CD8-positive, alpha-beta T cell (primary cell): ENCODE measurements at regions of chr9 and their contacts with region 1.

Region 1: GRCh38 chr9:133335878-133336811 is at the start of gene SURF6:
- DNase-seq: peak; percentile 81 to 97 (median 93)
- ATAC-seq: peak; percentile 94
- H3K4me3 ChIP-seq: peak within 1 kb of the TSS; percentile 67 to 88
- H3K4me3 Mint-ChIP-seq: peak within 1 kb of the TSS; percentile 96
- H3K27ac ChIP-seq: peak within 1 kb of the TSS; percentile 71 to 73
- H3K27ac Mint-ChIP-seq: peak within 1 kb of the TSS; percentile 95
- H3K4me1 ChIP-seq: peaks cover 41% of the 10 kb centered on the region
- H3K4me1 Mint-ChIP-seq: peaks cover 50% of the 10 kb centered on the region
- H3K27me3 ChIP-seq: no peaks in the 10 kb centered on the region
- H3K27me3 Mint-ChIP-seq: no peaks in the 10 kb centered on the region
- CTCF ChIP-seq: no peak
- total RNA-seq, gene SURF6: 17.0 to 17.8 TPM

Region 2: GRCh38 chr9:132944302-132945185 is 391.6 kb before region 1 on chr9 and contains the start of gene TSC1:
- CTCF ChIA-PET with region 1: no interaction called
- POLR2A ChIA-PET with region 1: no interaction called
- intact Hi-C with region 1: loop called in 1 of 2 experiments (anchors 10 kb)
- DNase-seq: peak; percentile 96 to 99 (median 98)
- ATAC-seq: peak; percentile 83
- H3K4me3 ChIP-seq: peak within 1 kb of the TSS; percentile 98 to 99
- H3K4me3 Mint-ChIP-seq: peak within 1 kb of the TSS; percentile 97
- H3K27ac ChIP-seq: peak within 1 kb of the TSS; percentile 90 to 100
- H3K27ac Mint-ChIP-seq: peak within 1 kb of the TSS; percentile 100
- H3K4me1 ChIP-seq: peaks cover 17% of the 10 kb centered on the region
- H3K4me1 Mint-ChIP-seq: peaks cover 29% of the 10 kb centered on the region
- H3K27me3 ChIP-seq: no peaks in the 10 kb centered on the region
- H3K27me3 Mint-ChIP-seq: no peaks in the 10 kb centered on the region
- CTCF ChIP-seq: no peak
- total RNA-seq, gene TSC1: 45.6 to 51.1 TPM

Region 3: GRCh38 chr9:133184962-133185361 is 151.2 kb before region 1 on chr9:
- CTCF ChIA-PET with region 1: no interaction called
- POLR2A ChIA-PET with region 1: no interaction called
- intact Hi-C with region 1: loop called in 1 of 2 experiments (anchors 1 kb)
- DNase-seq: peak in 6 of 9 experiments; percentile 17 to 80 (median 35)
- ATAC-seq: peak; percentile 49
- H3K4me3 ChIP-seq: no peak overlapping the region
- H3K4me3 Mint-ChIP-seq: no peak overlapping the region
- H3K27ac ChIP-seq: no peak overlapping the region
- H3K27ac Mint-ChIP-seq: no peak overlapping the region
- H3K4me1 ChIP-seq: peaks cover 8% of the 10 kb centered on the region
- H3K4me1 Mint-ChIP-seq: peaks cover 13% of the 10 kb centered on the region
- H3K27me3 ChIP-seq: peaks cover 3% of the 10 kb centered on the region in 2 experiments
- H3K27me3 Mint-ChIP-seq: peaks cover 31% of the 10 kb centered on the region
- CTCF ChIP-seq: peak; percentile 46

Region 4: GRCh38 chr9:133356391-133357091 is 20.4 kb after region 1 on chr9 and contains the starts of genes SURF1 and SURF2:
- CTCF ChIA-PET with region 1: interaction called, 7 read pairs
- POLR2A ChIA-PET with region 1: interaction called, 15 read pairs
- intact Hi-C with region 1: loop called (anchors 1 kb)
- DNase-seq: peak; percentile 81 to 93 (median 91)
- ATAC-seq: peak; percentile 93
- H3K4me3 ChIP-seq: peak within 1 kb of the TSS; percentile 78 to 86
- H3K4me3 Mint-ChIP-seq: peak within 1 kb of the TSS; percentile 87
- H3K27ac ChIP-seq: peak within 1 kb of the TSS; percentile 72 to 77
- H3K27ac Mint-ChIP-seq: peak within 1 kb of the TSS; percentile 93
- H3K4me1 ChIP-seq: peaks cover 30% of the 10 kb centered on the region
- H3K4me1 Mint-ChIP-seq: peaks cover 36% of the 10 kb centered on the region
- H3K27me3 ChIP-seq: no peaks in the 10 kb centered on the region
- H3K27me3 Mint-ChIP-seq: no peaks in the 10 kb centered on the region
- CTCF ChIP-seq: no peak
- total RNA-seq, gene SURF1: 34.3 to 36.8 TPM
- total RNA-seq, gene SURF2: 18.6 to 21.9 TPM

Region 5: DNA sequence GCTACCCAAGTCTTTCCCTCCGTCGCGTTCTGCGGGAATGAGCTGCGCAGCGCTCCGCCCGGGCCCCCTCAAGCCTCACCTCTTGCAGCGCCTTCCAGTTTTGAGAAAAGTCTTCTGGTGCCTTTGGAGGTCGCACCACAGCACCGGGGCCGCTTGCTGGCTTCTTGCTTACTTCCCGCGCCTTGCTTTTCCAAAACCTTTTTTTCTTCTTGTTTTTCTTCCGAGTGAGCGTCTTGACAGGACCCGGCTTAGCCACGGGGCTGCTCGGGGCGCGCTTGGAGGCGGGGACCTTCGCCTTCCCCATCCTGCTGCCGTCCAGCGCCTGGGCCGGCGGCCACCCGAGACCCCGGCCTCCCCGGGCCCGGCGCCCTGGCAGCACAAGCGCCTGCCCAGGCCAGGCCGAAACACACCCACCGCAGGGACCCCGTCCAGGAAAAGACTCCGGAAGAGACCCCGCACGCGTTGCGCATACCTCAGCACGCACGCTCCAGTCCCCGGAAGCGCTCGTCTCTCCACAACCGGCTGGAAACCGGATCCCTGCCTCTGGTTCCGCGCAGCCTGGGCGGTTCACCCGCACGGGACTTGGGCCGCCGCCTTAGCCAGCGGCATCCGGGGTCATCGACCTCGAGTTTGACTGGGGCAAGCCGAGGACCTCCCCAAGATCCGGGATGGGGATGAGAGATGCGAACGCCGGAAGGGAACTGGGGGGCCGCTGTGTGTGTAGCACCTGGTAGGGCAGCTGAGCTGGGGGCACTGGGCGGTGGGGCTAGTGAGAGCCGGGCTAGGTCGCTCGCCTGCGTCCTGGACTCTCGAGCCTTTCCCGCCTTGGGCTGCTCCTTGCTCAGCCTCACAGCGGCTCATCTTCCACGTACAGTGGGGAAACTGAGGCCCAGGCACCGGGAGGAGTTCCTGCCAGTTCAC is 81.7 kb after region 1 on chr9 and contains the start of gene REXO4:
- CTCF ChIA-PET with region 1: no interaction called
- POLR2A ChIA-PET with region 1: no interaction called
- intact Hi-C with region 1: loop called (anchors 1 kb)
- DNase-seq: peak; percentile 73 to 91 (median 81)
- ATAC-seq: peak; percentile 88
- H3K4me3 ChIP-seq: peak within 1 kb of the TSS; percentile 80 to 88
- H3K4me3 Mint-ChIP-seq: peak within 1 kb of the TSS; percentile 87
- H3K27ac ChIP-seq: peak within 1 kb of the TSS; percentile 68 to 89
- H3K27ac Mint-ChIP-seq: peak within 1 kb of the TSS; percentile 90
- H3K4me1 ChIP-seq: peaks cover 23% of the 10 kb centered on the region
- H3K4me1 Mint-ChIP-seq: peaks cover 54% of the 10 kb centered on the region
- H3K27me3 ChIP-seq: no peaks in the 10 kb centered on the region
- H3K27me3 Mint-ChIP-seq: no peaks in the 10 kb centered on the region
- CTCF ChIP-seq: no peak
- total RNA-seq, gene REXO4: 22.5 to 24.0 TPM

Region 6: GRCh38 chr9:133478851-133479711 is 142.9 kb after region 1 on chr9 and contains the start of gene SLC2A6:
- CTCF ChIA-PET with region 1: no interaction called
- POLR2A ChIA-PET with region 1: no interaction called
- intact Hi-C with region 1: loop called in 1 of 2 experiments (anchors 2 kb)
- DNase-seq: peak; percentile 58 to 92 (median 81)
- ATAC-seq: peak; percentile 96
- H3K4me3 ChIP-seq: peak within 1 kb of the TSS; percentile 62 to 65
- H3K4me3 Mint-ChIP-seq: peak within 1 kb of the TSS; percentile 75
- H3K27ac ChIP-seq: peak within 1 kb of the TSS; percentile 56 to 59
- H3K27ac Mint-ChIP-seq: peak within 1 kb of the TSS; percentile 72
- H3K4me1 ChIP-seq: peaks cover 15% of the 10 kb centered on the region
- H3K4me1 Mint-ChIP-seq: peaks cover 10% of the 10 kb centered on the region
- H3K27me3 ChIP-seq: no peaks in the 10 kb centered on the region
- H3K27me3 Mint-ChIP-seq: no peaks in the 10 kb centered on the region
- CTCF ChIP-seq: no peak
- total RNA-seq, gene SLC2A6: 8.0 to 9.7 TPM

Region 7: DNA sequence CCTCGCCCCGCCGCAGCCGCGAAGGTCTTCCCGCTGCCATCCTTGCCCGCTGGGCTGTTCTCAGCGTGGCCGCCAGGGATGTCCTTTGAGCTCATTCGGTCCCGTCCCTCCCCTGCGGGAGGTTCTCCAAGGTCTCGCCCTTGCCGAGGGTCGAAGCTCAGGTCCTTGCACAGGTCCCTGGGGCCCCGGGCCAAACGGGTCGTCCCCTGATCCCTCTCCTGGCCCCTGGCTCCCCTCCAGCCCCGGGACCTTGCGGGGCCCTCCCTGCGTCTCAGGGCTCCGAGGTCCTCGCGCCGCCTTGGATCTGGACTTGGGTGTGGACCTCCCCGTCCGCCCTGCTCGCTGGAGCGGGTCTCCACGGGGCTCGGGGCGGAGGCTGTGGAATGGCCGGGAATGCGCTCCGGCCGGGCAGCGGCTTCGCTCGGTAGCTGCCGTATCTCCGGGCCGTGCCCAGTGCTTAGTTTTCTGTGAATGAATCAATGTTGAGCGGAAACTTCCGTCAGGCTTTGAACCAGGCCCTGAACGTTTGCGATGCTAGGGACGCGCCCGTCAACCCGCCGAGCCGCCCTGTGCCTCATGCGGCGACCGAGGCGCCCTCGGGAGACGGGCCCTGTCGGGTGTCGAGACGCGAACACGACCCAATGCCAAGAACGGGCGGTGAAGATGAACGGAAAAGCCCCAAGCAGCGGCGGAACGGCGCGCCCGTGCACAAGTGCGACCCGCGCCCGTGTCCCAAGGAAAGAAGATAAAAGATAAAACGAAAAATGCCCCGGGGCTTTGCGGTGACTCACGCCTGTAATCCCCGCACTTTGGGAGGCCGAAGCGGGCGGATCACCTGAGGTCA is 827.4 kb after region 1 on chr9:
- CTCF ChIA-PET with region 1: no interaction called
- POLR2A ChIA-PET with region 1: no interaction called
- intact Hi-C with region 1: loop called in 1 of 2 experiments (anchors 5 kb)
- DNase-seq: peak; percentile 38 to 87 (median 68)
- ATAC-seq: peak; percentile 19
- H3K4me3 ChIP-seq: no peak overlapping the region
- H3K4me3 Mint-ChIP-seq: no peak overlapping the region
- H3K27ac ChIP-seq: no peak overlapping the region
- H3K27ac Mint-ChIP-seq: no peak overlapping the region
- H3K4me1 ChIP-seq: peaks cover 18% of the 10 kb centered on the region
- H3K4me1 Mint-ChIP-seq: peaks cover 17% of the 10 kb centered on the region
- H3K27me3 ChIP-seq: no peaks in the 10 kb centered on the region
- H3K27me3 Mint-ChIP-seq: no peaks in the 10 kb centered on the region
- CTCF ChIP-seq: peak; percentile 32